ENCODE measurements at regions of chr3 and their contacts with region 1.

Region 1: DNA sequence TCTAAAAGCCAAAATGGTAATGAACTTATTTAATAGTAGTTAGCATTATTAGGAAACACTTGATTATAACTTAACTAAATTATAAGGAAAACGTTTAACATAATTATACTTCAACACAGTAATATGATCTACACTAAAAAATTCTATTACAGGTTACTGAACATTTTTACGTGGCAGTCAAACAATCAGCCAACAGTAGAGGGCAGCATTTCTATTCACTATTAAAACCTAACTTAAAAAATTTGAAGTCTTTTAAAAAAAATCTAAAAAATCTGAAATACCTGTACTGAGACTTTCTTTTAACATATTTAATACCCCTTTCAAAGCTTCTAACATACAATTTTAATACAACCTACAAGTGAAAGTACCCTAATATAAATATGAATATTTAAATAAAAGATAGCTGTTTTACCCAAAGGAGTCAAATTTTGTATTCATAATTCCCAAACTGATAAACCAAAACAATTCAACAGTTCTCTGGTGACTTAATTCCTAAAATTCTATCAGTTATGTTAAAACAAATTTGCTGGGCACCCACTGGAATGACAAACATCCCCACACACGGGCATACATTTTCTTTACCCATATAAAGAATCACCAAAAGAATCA is 41.5 kb downstream of the DLG1 start:
- DNase-seq: no peak
- ATAC-seq: no peak
- H3K4me3 ChIP-seq: no peak overlapping the region
- H3K27ac ChIP-seq: no peak overlapping the region
- H3K4me1 ChIP-seq: no peaks in the 10 kb centered on the region
- H3K27me3 ChIP-seq: no peaks in the 10 kb centered on the region

Region 2: DNA sequence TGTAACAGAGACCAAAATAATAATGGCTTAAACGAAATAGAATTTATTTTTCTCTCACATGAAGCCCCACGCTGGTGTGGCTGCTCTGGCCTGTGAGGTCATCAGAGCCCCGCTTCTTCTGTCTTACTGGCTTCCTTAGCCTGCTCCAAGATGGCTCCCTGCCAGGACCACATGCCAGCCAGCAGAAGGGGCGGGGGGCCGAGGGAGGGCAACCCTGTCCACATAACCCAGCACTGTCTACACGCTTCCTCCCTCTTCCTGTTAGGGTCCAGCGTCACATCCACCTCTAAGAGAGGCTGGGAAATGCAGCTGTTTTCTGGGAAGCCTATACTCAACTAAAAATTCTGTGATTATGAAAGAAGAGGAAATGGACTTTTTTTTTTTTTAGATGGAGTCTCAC is 149.3 kb after region 1 on chr3:
- intact Hi-C with region 1: no loop called
- DNase-seq: peak; percentile 73 to 78
- ATAC-seq: peak; percentile 69
- H3K4me3 ChIP-seq: no peak overlapping the region
- H3K27ac ChIP-seq: no peak overlapping the region
- H3K4me1 ChIP-seq: no peaks in the 10 kb centered on the region
- H3K27me3 ChIP-seq: no peaks in the 10 kb centered on the region

Region 3: GRCh38 chr3:197511130-197511529 is 254.2 kb after region 1 on chr3:
- intact Hi-C with region 1: loop called (anchors 2 kb)
- DNase-seq: no peak
- ATAC-seq: no peak
- H3K4me3 ChIP-seq: no peak overlapping the region
- H3K27ac ChIP-seq: no peak overlapping the region
- H3K4me1 ChIP-seq: no peaks in the 10 kb centered on the region
- H3K27me3 ChIP-seq: no peaks in the 10 kb centered on the region

Measured in aorta (tissue), 5 donors.